ENCODE measurements at regions of chr7 and their contacts with region 1.

Region 1: GRCh38 chr7:65307651-65308299 is 65.9 kb upstream of the ZNF92 start:
- DNase-seq: peak; percentile 46
- H3K4me3 ChIP-seq: no peak overlapping the region
- H3K27ac ChIP-seq: no peak overlapping the region
- H3K4me1 ChIP-seq: no peaks in the 10 kb centered on the region
- H3K27me3 ChIP-seq: no peaks in the 10 kb centered on the region
- CTCF ChIP-seq: peak; percentile 70 to 82 (median 76)
- POLR2A ChIP-seq: no peak

Region 2: GRCh38 chr7:64951250-64951848 is 356.4 kb before region 1 on chr7:
- intact Hi-C with region 1: loop called (anchors 5 kb)
- DNase-seq: no peak
- H3K4me3 ChIP-seq: no peak overlapping the region
- H3K27ac ChIP-seq: no peak overlapping the region
- H3K4me1 ChIP-seq: peaks cover 12% of the 10 kb centered on the region
- H3K27me3 ChIP-seq: no peaks in the 10 kb centered on the region
- CTCF ChIP-seq: peak; percentile 69 to 85 (median 74)
- POLR2A ChIP-seq: no peak

Region 3: DNA sequence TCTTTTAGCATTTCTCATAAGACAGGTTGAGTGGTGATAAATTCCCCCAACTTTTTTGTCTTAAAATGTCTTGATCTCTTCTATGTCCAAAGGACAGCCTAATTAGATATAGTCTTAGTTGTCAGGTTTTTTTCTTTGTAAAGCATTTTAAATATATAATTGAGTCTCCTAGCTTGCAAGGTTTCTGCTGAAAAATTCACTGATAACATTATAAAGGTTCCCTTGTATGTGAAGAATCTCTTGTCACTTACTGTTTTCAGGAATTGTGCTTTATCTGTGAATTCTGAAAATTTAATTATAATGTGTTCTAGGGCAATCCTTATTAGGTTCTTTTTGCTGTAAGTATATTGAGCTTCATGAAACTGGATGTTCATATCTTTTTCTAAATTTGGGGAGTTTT is 31.0 kb before region 1 on chr7:
- intact Hi-C with region 1: no loop called
- DNase-seq: no peak
- H3K4me3 ChIP-seq: no peak overlapping the region
- H3K27ac ChIP-seq: no peak overlapping the region
- H3K4me1 ChIP-seq: no peaks in the 10 kb centered on the region
- H3K27me3 ChIP-seq: no peaks in the 10 kb centered on the region
- CTCF ChIP-seq: no peak
- POLR2A ChIP-seq: no peak

Region 4: GRCh38 chr7:65397730-65398142 is 90.0 kb after region 1 on chr7:
- intact Hi-C with region 1: no loop called
- DNase-seq: no peak
- H3K4me3 ChIP-seq: no peak overlapping the region
- H3K27ac ChIP-seq: no peak overlapping the region
- H3K4me1 ChIP-seq: no peaks in the 10 kb centered on the region
- H3K27me3 ChIP-seq: no peaks in the 10 kb centered on the region
- CTCF ChIP-seq: no peak
- POLR2A ChIP-seq: no peak